Dendritic cell treated with granulocyte-macrophage colony-stimulating factor and Interleukin-4, amounts not matched to agents 40 ng/mL and 50 ng/mL, for 4 days (primary cell): ENCODE measurements at regions of chr5 and their contacts with region 1.

Region 1: GRCh38 chr5:61277190-61277589 is 54.9 kb upstream of the ZSWIM6 start:
- H3K4me3 Mint-ChIP-seq: peak overlapping the region; percentile 74
- H3K27ac Mint-ChIP-seq: no peak overlapping the region
- H3K4me1 Mint-ChIP-seq: peaks cover 45% of the 10 kb centered on the region
- H3K27me3 Mint-ChIP-seq: no peaks in the 10 kb centered on the region

Region 2: DNA sequence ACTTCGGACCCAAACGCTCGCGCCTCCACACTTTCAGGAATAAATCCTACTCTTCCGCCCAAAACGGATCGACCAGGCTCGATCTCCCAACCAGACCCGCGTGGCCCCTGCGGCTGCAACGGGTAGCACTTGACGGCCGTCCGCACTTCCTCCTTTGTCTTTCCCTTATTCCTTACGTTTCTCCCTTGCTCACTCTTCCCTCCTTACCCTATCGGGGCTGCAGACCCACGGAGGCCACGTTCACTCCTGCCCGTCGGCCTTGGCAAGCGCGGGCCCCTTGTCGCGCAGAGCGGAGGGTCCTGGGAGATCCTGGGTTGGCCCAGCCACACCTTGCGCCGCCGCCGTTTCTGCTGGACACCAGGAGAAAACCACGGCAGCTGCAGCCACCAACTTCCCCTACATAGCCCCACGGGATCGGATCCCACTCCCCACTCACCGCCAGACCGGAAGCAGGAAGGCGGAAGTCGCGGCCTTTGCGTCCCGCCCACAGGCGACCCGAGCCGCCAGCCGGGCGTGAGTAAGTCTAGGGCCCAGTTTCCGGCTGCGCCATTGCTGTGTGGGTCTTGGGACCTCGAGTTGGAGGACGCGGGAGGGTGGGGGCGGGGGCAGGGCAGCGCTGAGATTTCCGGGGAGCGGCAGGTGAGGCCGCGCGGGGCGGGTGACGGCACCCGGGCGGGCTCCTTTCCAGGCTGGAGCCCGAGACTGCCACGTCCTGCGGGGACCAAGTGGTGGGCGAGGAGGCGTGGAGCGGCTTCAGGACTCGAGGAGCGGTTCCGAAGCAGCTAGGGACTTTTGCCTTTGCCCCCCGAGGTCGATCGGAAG is 115.0 kb before region 1 on chr5 and contains the start of gene SMIM15:
- intact Hi-C with region 1: loop called (anchors 5 kb)
- H3K4me3 Mint-ChIP-seq: peak within 1 kb of the TSS; percentile 84
- H3K27ac Mint-ChIP-seq: peak within 1 kb of the TSS; percentile 97
- H3K4me1 Mint-ChIP-seq: peaks cover 45% of the 10 kb centered on the region
- H3K27me3 Mint-ChIP-seq: no peaks in the 10 kb centered on the region

Region 3: GRCh38 chr5:61228691-61229280 is 48.4 kb before region 1 on chr5:
- intact Hi-C with region 1: loop called (anchors 10 kb)
- H3K4me3 Mint-ChIP-seq: no peak overlapping the region
- H3K27ac Mint-ChIP-seq: no peak overlapping the region
- H3K4me1 Mint-ChIP-seq: peaks cover 14% of the 10 kb centered on the region
- H3K27me3 Mint-ChIP-seq: peaks cover 3% of the 10 kb centered on the region

Region 4: DNA sequence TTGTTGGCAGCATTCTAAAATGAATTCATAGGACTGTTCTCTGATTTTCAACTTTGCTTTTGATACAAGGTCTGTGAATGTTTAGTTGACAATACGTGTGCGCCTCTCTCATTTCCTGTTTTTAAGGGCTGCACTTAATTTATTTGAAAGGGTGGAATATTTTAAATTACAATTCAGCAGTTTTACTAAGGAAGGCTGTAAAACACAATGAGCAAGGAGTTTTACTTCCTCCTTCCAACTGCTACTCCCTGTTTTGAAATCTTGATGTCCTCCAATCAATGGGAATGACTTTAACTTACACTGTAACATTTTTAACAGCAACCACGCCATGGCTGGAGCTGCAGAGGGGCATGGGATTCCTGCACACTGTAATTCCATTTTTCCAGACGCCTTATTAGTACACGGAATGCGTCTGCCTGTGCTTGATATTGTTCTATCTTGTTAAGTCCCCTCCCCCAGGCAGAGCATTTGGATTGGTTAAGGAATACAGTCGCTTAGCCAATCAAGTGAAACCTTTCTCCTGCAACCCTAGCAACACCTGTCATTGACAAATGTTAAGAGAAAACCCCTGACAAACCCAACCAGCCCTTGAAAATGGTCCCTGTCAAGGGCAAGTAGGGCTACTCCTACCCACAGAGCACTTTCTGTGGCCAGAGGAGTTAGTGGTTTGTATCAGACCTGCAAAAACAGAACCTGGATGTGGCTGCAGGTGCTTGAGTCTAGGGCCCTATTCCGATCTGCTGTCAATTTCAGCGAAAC is 42.4 kb after region 1 on chr5:
- intact Hi-C with region 1: loop called (anchors 5 kb)
- H3K4me3 Mint-ChIP-seq: peak overlapping the region; percentile 30
- H3K27ac Mint-ChIP-seq: peak overlapping the region; percentile 87
- H3K4me1 Mint-ChIP-seq: peaks cover 76% of the 10 kb centered on the region
- H3K27me3 Mint-ChIP-seq: no peaks in the 10 kb centered on the region

Region 5: GRCh38 chr5:61408476-61409168 is 131.4 kb after region 1 on chr5:
- intact Hi-C with region 1: loop called (anchors 2 kb)
- H3K4me3 Mint-ChIP-seq: peak overlapping the region; percentile 56
- H3K27ac Mint-ChIP-seq: peak overlapping the region; percentile 60
- H3K4me1 Mint-ChIP-seq: peaks cover 48% of the 10 kb centered on the region
- H3K27me3 Mint-ChIP-seq: no peaks in the 10 kb centered on the region

Region 6: DNA sequence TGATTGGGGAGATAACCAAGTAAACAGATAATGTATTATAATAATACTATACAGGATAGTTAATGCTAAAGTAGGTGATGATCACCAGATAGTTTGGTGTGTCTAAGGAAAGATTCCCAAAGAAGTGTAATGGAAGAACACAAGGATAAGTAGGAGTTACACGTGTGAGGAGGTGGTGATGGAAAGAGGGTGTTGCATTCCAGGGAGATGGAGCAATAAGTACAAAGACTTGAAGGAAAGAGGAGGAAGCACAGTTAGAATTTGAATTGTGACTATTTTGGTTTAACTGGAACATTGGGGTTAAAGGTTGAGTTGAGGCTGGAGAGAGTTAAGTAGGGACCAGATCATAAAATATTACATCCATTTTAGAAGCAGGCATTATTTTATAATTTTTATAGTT is 1212.3 kb after region 1 on chr5:
- intact Hi-C with region 1: no loop called
- H3K4me3 Mint-ChIP-seq: no peak overlapping the region
- H3K27ac Mint-ChIP-seq: no peak overlapping the region
- H3K4me1 Mint-ChIP-seq: no peaks in the 10 kb centered on the region
- H3K27me3 Mint-ChIP-seq: no peaks in the 10 kb centered on the region